ENCODE measurements at regions of chr17 and their contacts with region 1.

Region 1: GRCh38 chr17:77957857-77958715 is at the start of gene TNRC6C:
- DNase-seq: peak; percentile 99 to 100 (median 100)
- H3K4me3 ChIP-seq: peak within 1 kb of the TSS; percentile 80 to 92
- H3K4me3 Mint-ChIP-seq: peak within 1 kb of the TSS; percentile 93 to 100 (median 98)
- H3K27ac ChIP-seq: peak within 1 kb of the TSS; percentile 68
- H3K27ac Mint-ChIP-seq: peak within 1 kb of the TSS; percentile 91 to 97 (median 95)
- H3K4me1 ChIP-seq: peaks cover 42% of the 10 kb centered on the region
- H3K4me1 Mint-ChIP-seq: peaks cover 25 to 51% (median 38%) of the 10 kb centered on the region in 4 donors
- H3K27me3 ChIP-seq: no peaks in the 10 kb centered on the region
- H3K27me3 Mint-ChIP-seq: peaks cover 0 to 4% of the 10 kb centered on the region in 2 donors
- total RNA-seq, gene TNRC6C: 105 to 112 TPM

Region 2: DNA sequence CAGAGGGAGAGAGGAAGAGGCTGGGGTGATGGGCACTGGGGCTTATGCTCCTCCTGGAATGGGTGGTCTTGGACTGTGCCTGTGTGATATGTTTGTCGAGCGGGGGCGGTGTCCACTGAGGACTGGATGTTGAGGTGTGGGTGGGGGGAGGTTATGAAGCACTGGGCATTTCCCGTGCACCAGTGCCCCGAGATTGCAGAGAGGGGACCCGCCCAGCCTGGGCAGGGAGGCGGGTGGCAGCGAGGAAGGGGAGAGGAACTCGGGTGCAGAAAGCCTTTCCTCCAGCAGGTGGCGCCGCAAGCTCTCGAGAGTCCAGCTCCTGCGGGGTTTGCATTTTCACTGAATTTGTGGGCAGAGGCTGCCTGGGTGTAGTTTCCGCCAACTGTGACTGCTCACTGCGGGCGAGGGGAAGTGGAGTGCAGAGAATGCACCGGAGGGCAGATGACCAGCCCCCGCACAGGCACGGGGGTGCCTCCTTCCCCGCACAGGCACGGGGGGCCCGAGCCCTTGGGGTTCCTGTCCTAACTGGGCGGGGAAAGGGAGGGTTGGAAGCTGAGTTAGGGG is 626.7 kb before region 1 on chr17:
- CTCF ChIA-PET with region 1: interaction called, 3 read pairs
- POLR2A ChIA-PET with region 1: interaction called, 13 read pairs
- intact Hi-C with region 1: no loop called
- DNase-seq: peak; percentile 92 to 95 (median 94)
- H3K4me3 ChIP-seq: peak overlapping the region; percentile 48 to 57
- H3K4me3 Mint-ChIP-seq: peak overlapping the region; percentile 80 to 90 (median 85)
- H3K27ac ChIP-seq: peak overlapping the region; percentile 43
- H3K27ac Mint-ChIP-seq: peak overlapping the region; percentile 83 to 95 (median 93)
- H3K4me1 ChIP-seq: peaks cover 52% of the 10 kb centered on the region
- H3K4me1 Mint-ChIP-seq: peaks cover 30 to 66% (median 44%) of the 10 kb centered on the region in 4 donors
- H3K27me3 ChIP-seq: no peaks in the 10 kb centered on the region
- H3K27me3 Mint-ChIP-seq: no peaks in the 10 kb centered on the region

Region 3: GRCh38 chr17:77666881-77667395 is 291.1 kb before region 1 on chr17:
- CTCF ChIA-PET with region 1: interaction called, 5 read pairs
- POLR2A ChIA-PET with region 1: interaction called, 64 read pairs
- intact Hi-C with region 1: loop called (anchors 1 kb)
- DNase-seq: peak; percentile 83 to 89 (median 84)
- H3K4me3 ChIP-seq: peak overlapping the region; percentile 49 to 53
- H3K4me3 Mint-ChIP-seq: peak overlapping the region; percentile 81 to 98 (median 90)
- H3K27ac ChIP-seq: peak overlapping the region; percentile 54
- H3K27ac Mint-ChIP-seq: peak overlapping the region; percentile 82 to 98 (median 97)
- H3K4me1 ChIP-seq: peaks cover 35% of the 10 kb centered on the region
- H3K4me1 Mint-ChIP-seq: peaks cover 44 to 64% (median 50%) of the 10 kb centered on the region in 4 donors
- H3K27me3 ChIP-seq: no peaks in the 10 kb centered on the region
- H3K27me3 Mint-ChIP-seq: no peaks in the 10 kb centered on the region

Region 4: GRCh38 chr17:77842528-77843147 is 115.4 kb before region 1 on chr17:
- CTCF ChIA-PET with region 1: interaction called, 3 read pairs
- POLR2A ChIA-PET with region 1: interaction called, 58 read pairs
- intact Hi-C with region 1: loop called (anchors 2 kb)
- DNase-seq: no peak
- H3K4me3 ChIP-seq: no peak overlapping the region
- H3K4me3 Mint-ChIP-seq: peak overlapping the region in 7 of 8 donors; percentile 4 to 85 (median 69)
- H3K27ac ChIP-seq: no peak overlapping the region
- H3K27ac Mint-ChIP-seq: peak overlapping the region; percentile 87 to 97 (median 93)
- H3K4me1 ChIP-seq: peaks cover 63% of the 10 kb centered on the region
- H3K4me1 Mint-ChIP-seq: peaks cover 34 to 74% (median 43%) of the 10 kb centered on the region in 4 donors
- H3K27me3 ChIP-seq: no peaks in the 10 kb centered on the region
- H3K27me3 Mint-ChIP-seq: no peaks in the 10 kb centered on the region

Region 5: GRCh38 chr17:77914385-77915254 is 43.5 kb before region 1 on chr17:
- CTCF ChIA-PET with region 1: no interaction called
- POLR2A ChIA-PET with region 1: interaction called, 13 read pairs
- intact Hi-C with region 1: no loop called
- DNase-seq: no peak
- H3K4me3 ChIP-seq: no peak overlapping the region
- H3K4me3 Mint-ChIP-seq: no peak overlapping the region
- H3K27ac ChIP-seq: no peak overlapping the region
- H3K27ac Mint-ChIP-seq: peak overlapping the region in 1 of 7 donors; percentile 63
- H3K4me1 ChIP-seq: peaks cover 8% of the 10 kb centered on the region
- H3K4me1 Mint-ChIP-seq: peaks cover 9 to 21% (median 14%) of the 10 kb centered on the region in 4 donors
- H3K27me3 ChIP-seq: peaks cover 11% of the 10 kb centered on the region
- H3K27me3 Mint-ChIP-seq: peaks cover 30 to 32% of the 10 kb centered on the region in 2 donors

Region 6: DNA sequence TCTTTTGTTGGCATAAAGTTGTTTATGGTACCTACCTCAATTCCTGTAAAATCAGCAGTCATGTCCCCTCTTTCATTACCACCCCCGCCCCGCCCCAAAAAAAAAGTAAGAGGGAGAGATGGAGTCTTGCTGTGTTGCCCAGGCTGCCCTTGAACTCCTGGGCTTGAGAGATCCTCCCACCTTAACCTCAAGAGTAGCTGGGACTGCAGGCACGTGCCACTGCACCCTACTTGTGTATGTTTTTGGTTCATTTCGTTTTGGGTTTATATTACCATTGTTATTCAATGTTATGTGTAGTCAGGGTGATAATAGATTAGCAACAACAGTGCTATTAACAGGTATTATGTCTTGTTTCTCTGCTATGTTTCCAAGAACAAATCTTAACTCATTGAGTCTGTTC is 16.3 kb after region 1 on chr17:
- CTCF ChIA-PET with region 1: interaction called, 3 read pairs
- POLR2A ChIA-PET with region 1: interaction called, 52 read pairs
- intact Hi-C with region 1: no loop called
- DNase-seq: no peak
- H3K4me3 ChIP-seq: no peak overlapping the region
- H3K4me3 Mint-ChIP-seq: peak overlapping the region in 5 of 8 donors; percentile 1 to 57 (median 35)
- H3K27ac ChIP-seq: no peak overlapping the region
- H3K27ac Mint-ChIP-seq: peak overlapping the region in 5 of 7 donors; percentile 6 to 77 (median 34)
- H3K4me1 ChIP-seq: peaks cover 37% of the 10 kb centered on the region
- H3K4me1 Mint-ChIP-seq: peaks cover 51 to 86% (median 66%) of the 10 kb centered on the region in 4 donors
- H3K27me3 ChIP-seq: no peaks in the 10 kb centered on the region
- H3K27me3 Mint-ChIP-seq: no peaks in the 10 kb centered on the region

Region 7: GRCh38 chr17:78250891-78251794 is 293.1 kb after region 1 on chr17:
- CTCF ChIA-PET with region 1: no interaction called
- POLR2A ChIA-PET with region 1: interaction called, 12 read pairs
- intact Hi-C with region 1: no loop called
- DNase-seq: peak; percentile 75 to 85 (median 80)
- H3K4me3 ChIP-seq: peak overlapping the region; percentile 54 to 65
- H3K4me3 Mint-ChIP-seq: peak overlapping the region; percentile 82 to 94 (median 88)
- H3K27ac ChIP-seq: peak overlapping the region; percentile 61
- H3K27ac Mint-ChIP-seq: peak overlapping the region; percentile 96 to 99 (median 98)
- H3K4me1 ChIP-seq: peaks cover 56% of the 10 kb centered on the region
- H3K4me1 Mint-ChIP-seq: peaks cover 31 to 58% (median 44%) of the 10 kb centered on the region in 4 donors
- H3K27me3 ChIP-seq: no peaks in the 10 kb centered on the region
- H3K27me3 Mint-ChIP-seq: peaks cover 0 to 1% of the 10 kb centered on the region in 2 donors

Region 8: GRCh38 chr17:78789663-78790181 is 831.6 kb after region 1 on chr17:
- CTCF ChIA-PET with region 1: no interaction called
- POLR2A ChIA-PET with region 1: no interaction called
- intact Hi-C with region 1: no loop called
- DNase-seq: peak; percentile 76 to 85 (median 78)
- H3K4me3 ChIP-seq: no peak overlapping the region
- H3K4me3 Mint-ChIP-seq: peak overlapping the region in 7 of 8 donors; percentile 37 to 84 (median 70)
- H3K27ac ChIP-seq: peak overlapping the region; percentile 48
- H3K27ac Mint-ChIP-seq: peak overlapping the region; percentile 81 to 97 (median 95)
- H3K4me1 ChIP-seq: peaks cover 74% of the 10 kb centered on the region
- H3K4me1 Mint-ChIP-seq: peaks cover 39 to 89% (median 63%) of the 10 kb centered on the region in 4 donors
- H3K27me3 ChIP-seq: no peaks in the 10 kb centered on the region
- H3K27me3 Mint-ChIP-seq: no peaks in the 10 kb centered on the region

Measured in CD4-positive, alpha-beta memory T cell (primary cell).